AG04450 (cell line): ENCODE measurements at regions of chr3 and their contacts with region 1.

Region 1: DNA sequence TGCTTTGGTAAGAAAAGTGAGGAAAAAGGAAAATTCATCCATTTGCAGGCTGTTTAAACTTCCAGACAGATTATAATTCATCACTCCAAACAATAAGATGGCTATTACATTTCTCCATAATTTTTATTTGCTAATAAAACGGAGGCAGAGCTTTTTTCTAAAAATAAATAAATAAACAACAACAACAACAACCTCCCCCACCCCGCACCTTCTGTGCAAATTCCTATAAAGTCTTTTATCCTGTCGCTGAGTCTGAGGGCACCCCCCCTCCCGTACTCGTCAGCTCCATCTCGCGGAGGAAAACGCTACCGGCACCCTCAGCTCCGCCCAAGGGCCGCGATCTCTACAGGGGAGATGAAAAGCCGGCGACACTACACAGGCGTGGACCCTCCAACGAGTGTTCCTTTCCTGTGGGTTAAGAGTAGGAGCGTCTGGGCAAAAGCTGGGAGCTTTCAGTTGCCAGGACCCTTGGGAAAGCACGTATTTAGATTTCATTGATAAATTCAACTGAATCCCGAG is 1.0 kb upstream of the ATP1B3 start:
- DNase-seq: peak; percentile 52
- H3K4me3 ChIP-seq: peak overlapping the region; percentile 79
- H3K27ac ChIP-seq: peak overlapping the region; percentile 96
- H3K27me3 ChIP-seq: no peaks in the 10 kb centered on the region
- CTCF ChIP-seq: peak; percentile 91

Region 2: GRCh38 chr3:141575879-141576743 is 299.3 kb before region 1 on chr3:
- CTCF ChIA-PET with region 1: interaction called, 19 read pairs
- POLR2A ChIA-PET with region 1: no interaction called
- DNase-seq: no peak
- H3K4me3 ChIP-seq: no peak overlapping the region
- H3K27ac ChIP-seq: no peak overlapping the region
- H3K27me3 ChIP-seq: no peaks in the 10 kb centered on the region
- CTCF ChIP-seq: peak; percentile 64

Region 3: DNA sequence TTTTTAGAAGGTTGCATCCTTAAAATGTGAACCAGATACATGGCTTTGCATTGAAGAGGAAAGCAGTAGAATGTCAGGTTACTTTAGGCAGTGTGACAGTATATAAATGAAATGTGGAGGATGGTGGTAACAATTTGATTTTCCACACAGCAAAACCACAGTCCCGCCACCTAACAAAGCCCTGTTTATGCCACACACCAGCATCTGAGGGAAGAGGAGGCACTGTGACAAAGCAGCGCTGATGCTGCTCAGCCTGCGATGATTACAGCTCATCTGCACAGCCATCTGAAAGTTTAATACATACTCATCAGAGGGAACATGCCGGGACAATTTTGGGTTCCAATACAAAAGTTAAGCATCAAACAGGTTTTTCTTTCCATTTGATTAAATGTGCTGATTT is 128.5 kb before region 1 on chr3:
- CTCF ChIA-PET with region 1: interaction called, 12 read pairs
- POLR2A ChIA-PET with region 1: interaction called, 3 read pairs
- DNase-seq: no peak
- H3K4me3 ChIP-seq: no peak overlapping the region
- H3K27ac ChIP-seq: no peak overlapping the region
- H3K27me3 ChIP-seq: no peaks in the 10 kb centered on the region
- CTCF ChIP-seq: no peak

Region 4: GRCh38 chr3:141887051-141887450 is 11.6 kb after region 1 on chr3:
- CTCF ChIA-PET with region 1: interaction called, 23 read pairs
- POLR2A ChIA-PET with region 1: no interaction called
- DNase-seq: no peak
- H3K4me3 ChIP-seq: no peak overlapping the region
- H3K27ac ChIP-seq: no peak overlapping the region
- H3K27me3 ChIP-seq: no peaks in the 10 kb centered on the region
- CTCF ChIP-seq: no peak

Region 5: DNA sequence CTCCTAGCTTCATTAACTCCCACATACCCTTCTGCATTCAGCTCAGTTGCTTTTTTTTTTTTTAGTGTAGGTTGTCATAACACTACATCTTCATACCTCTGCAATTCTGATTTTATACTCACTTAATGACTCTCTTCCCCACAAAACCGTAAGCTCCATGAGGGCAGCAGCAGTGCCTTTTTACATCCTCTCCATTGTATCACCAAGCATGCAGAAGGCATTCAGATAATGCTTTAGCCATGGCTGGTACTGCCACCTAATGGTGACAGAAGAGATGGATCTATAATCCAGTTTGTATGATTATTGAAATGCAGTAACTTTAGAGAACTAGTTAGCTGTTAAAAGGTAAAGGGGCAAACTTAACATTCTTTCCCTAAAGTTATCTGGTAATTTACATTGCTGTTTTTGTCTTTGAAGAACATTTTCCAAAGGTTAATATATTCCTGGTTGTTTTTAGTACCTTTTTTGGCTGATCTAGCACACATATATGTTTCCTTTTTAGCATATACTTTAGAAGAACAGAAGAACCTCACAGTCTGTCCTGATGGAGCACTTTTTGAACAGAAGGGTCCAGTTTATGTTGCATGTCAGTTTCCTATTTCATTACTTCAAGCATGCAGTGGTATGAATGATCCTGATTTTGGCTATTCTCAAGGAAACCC is 37.8 kb after region 1 on chr3:
- CTCF ChIA-PET with region 1: interaction called, 31 read pairs
- POLR2A ChIA-PET with region 1: interaction called, 3 read pairs
- DNase-seq: no peak
- H3K4me3 ChIP-seq: no peak overlapping the region
- H3K27ac ChIP-seq: no peak overlapping the region
- H3K27me3 ChIP-seq: no peaks in the 10 kb centered on the region
- CTCF ChIP-seq: peak; percentile 70